SK-N-SH (cell line): ENCODE measurements at regions of chr1 and their contacts with region 1.

Region 1: GRCh38 chr1:168342572-168343280 is 62.0 kb downstream of the TBX19 start:
- DNase-seq: peak; percentile 71
- H3K4me3 ChIP-seq: peak overlapping the region; percentile 23 to 40; a peak in 3 of 4 replicates
- H3K27ac ChIP-seq: peak overlapping the region in 1 of 2 experiments; percentile 71; a peak in 1 of 4 replicates
- H3K4me1 ChIP-seq: peaks cover 0 to 7% of the 10 kb centered on the region in 2 experiments; a peak in 2 of 4 replicates
- H3K27me3 ChIP-seq: no peaks in the 10 kb centered on the region
- CTCF ChIP-seq: peak; percentile 68
- EP300 ChIP-seq: no peak
- RAD21 ChIP-seq: peak; percentile 86

Region 2: GRCh38 chr1:168312718-168313604 is 29.8 kb before region 1 on chr1:
- CTCF ChIA-PET with region 1: interaction called, 33 read pairs
- POLR2A ChIA-PET with region 1: no interaction called
- DNase-seq: no peak
- H3K4me3 ChIP-seq: no peak overlapping the region
- H3K27ac ChIP-seq: no peak overlapping the region
- H3K4me1 ChIP-seq: no peaks in the 10 kb centered on the region
- H3K27me3 ChIP-seq: no peaks in the 10 kb centered on the region
- CTCF ChIP-seq: no peak
- EP300 ChIP-seq: no peak
- RAD21 ChIP-seq: no peak

Region 3: GRCh38 chr1:168360151-168361021 is 17.7 kb after region 1 on chr1:
- CTCF ChIA-PET with region 1: interaction called, 18 read pairs
- POLR2A ChIA-PET with region 1: no interaction called
- DNase-seq: no peak
- H3K4me3 ChIP-seq: no peak overlapping the region
- H3K27ac ChIP-seq: no peak overlapping the region
- H3K4me1 ChIP-seq: no peaks in the 10 kb centered on the region; a peak in 1 of 4 replicates
- H3K27me3 ChIP-seq: no peaks in the 10 kb centered on the region
- CTCF ChIP-seq: no peak
- EP300 ChIP-seq: no peak
- RAD21 ChIP-seq: no peak

Region 4: GRCh38 chr1:168386949-168387586 is 44.3 kb after region 1 on chr1:
- CTCF ChIA-PET with region 1: interaction called, 10 read pairs
- POLR2A ChIA-PET with region 1: no interaction called
- DNase-seq: peak; percentile 58
- H3K4me3 ChIP-seq: peak overlapping the region in 1 of 2 experiments; percentile 34; a peak in 2 of 4 replicates
- H3K27ac ChIP-seq: no peak overlapping the region
- H3K4me1 ChIP-seq: peaks cover 0 to 8% of the 10 kb centered on the region in 2 experiments; a peak in 1 of 4 replicates
- H3K27me3 ChIP-seq: no peaks in the 10 kb centered on the region
- CTCF ChIP-seq: no peak
- EP300 ChIP-seq: no peak
- RAD21 ChIP-seq: no peak

Region 5: GRCh38 chr1:168421399-168422004 is 78.8 kb after region 1 on chr1:
- CTCF ChIA-PET with region 1: interaction called, 14 read pairs
- POLR2A ChIA-PET with region 1: no interaction called
- DNase-seq: no peak
- H3K4me3 ChIP-seq: no peak overlapping the region
- H3K27ac ChIP-seq: no peak overlapping the region
- H3K4me1 ChIP-seq: peaks cover under 1 to 9% of the 10 kb centered on the region in 2 experiments
- H3K27me3 ChIP-seq: no peaks in the 10 kb centered on the region
- CTCF ChIP-seq: no peak
- EP300 ChIP-seq: no peak
- RAD21 ChIP-seq: no peak

Region 6: GRCh38 chr1:168469690-168470089 is 127.0 kb after region 1 on chr1:
- CTCF ChIA-PET with region 1: interaction called, 10 read pairs
- POLR2A ChIA-PET with region 1: no interaction called
- DNase-seq: peak; percentile 54
- H3K4me3 ChIP-seq: 0 out of 4 replicates have a peak overlapping the region, but pooled peaks of 1 of the 2 experiments have one; percentile 31
- H3K27ac ChIP-seq: peak overlapping the region; percentile 95 to 99
- H3K4me1 ChIP-seq: peaks cover 43% of the 10 kb centered on the region in 2 experiments
- H3K27me3 ChIP-seq: no peaks in the 10 kb centered on the region
- CTCF ChIP-seq: no peak
- EP300 ChIP-seq: peak; percentile 93 to 100
- RAD21 ChIP-seq: no peak

Region 7: DNA sequence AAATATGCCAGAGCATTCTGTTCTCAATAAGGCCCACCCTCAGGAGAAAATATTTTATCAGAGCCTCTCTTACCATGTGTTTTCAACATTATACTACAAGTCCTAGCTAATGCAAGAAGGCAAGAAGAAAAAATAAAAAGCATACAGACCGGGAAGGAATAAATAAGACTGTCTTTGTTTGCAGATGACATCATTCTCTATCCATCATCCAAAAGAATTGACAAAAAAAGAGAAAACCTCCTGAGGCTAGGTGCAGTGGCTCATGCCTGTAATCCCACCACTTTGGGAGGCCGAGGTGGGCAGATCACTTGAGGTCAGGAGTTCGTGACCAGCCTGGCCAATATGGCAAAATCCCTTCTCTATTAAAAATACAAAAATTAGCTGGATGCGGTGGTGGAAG is 511.1 kb after region 1 on chr1:
- CTCF ChIA-PET with region 1: no interaction called
- POLR2A ChIA-PET with region 1: no interaction called
- DNase-seq: no peak
- H3K4me3 ChIP-seq: no peak overlapping the region
- H3K27ac ChIP-seq: no peak overlapping the region
- H3K4me1 ChIP-seq: no peaks in the 10 kb centered on the region
- H3K27me3 ChIP-seq: no peaks in the 10 kb centered on the region
- CTCF ChIP-seq: no peak
- EP300 ChIP-seq: no peak
- RAD21 ChIP-seq: no peak

Region 8: DNA sequence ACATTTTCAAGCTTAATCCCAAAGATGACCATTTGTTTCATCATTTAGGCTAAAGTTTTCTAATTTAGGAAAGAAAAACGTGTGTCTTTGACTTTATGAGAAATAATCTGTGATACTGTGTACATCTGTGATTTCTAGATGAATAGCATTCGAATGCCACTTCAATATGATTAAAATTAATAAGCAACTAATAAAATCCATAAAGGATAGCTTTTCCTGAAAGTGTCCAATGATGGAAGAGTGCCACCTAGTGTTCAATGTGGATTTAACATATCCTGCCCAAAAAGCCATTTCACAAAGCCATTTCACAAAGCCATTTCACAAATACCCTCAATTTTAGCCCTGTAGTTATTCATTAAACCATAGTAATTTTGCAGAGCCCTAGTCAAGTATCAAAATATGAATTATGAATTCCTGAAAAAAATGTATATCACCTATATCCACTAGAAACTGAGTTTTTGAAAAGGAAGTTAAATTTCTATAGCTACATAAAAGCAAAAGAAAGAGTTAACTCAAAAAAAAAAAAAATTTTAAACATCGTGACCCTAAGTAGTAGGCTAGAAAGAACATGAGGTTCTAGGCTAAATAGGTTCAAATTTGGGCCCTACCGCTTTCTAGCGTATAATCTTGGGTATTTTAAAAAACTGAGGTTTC is 1005.8 kb after region 1 on chr1:
- CTCF ChIA-PET with region 1: interaction called, 36 read pairs
- POLR2A ChIA-PET with region 1: no interaction called
- DNase-seq: peak; percentile 37
- H3K4me3 ChIP-seq: no peak overlapping the region; a peak in 1 of 4 replicates
- H3K27ac ChIP-seq: no peak overlapping the region
- H3K4me1 ChIP-seq: peaks cover 4% of the 10 kb centered on the region in 2 experiments; a peak in 1 of 4 replicates
- H3K27me3 ChIP-seq: no peaks in the 10 kb centered on the region
- CTCF ChIP-seq: peak; percentile 87
- EP300 ChIP-seq: no peak
- RAD21 ChIP-seq: peak; percentile 92